ENCODE measurements at regions of chr1 and their contacts with region 1.

Region 1: DNA sequence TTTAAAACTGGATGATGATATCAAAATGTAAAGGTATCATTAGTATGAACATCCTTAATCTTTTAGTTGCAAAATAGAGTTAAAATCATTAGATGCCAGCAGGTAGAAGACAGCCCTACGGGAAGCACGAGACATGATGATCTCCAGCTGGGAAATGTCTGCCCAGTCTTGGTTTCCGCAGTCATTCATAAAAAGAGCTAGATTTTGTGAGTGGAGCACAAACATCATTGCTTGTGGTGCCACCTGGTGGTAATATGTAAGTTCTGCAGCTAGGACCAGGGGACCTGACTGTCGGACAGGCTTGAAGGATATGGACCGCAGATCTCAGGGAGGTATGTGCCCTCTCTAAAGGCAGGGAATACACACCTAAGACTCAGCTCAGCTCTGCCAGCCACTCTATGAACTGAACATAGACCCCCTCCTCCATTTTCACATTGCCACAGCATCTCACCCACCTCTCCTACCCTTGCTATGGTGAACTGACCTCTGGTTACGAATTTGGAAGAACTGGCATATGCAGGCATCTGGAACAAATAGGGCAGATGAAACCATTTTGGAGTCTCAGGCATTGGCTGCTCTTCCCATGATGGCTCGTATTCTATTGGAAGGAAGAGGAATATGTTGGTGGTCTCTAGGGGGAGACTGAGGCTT is 9.2 kb downstream of the FCMR start:
- DNase-seq: peak in 2 of 3 donors; percentile 60 to 81
- ATAC-seq: peak; percentile 65
- H3K4me3 ChIP-seq: no peak overlapping the region
- H3K4me1 ChIP-seq: peaks cover 16% of the 10 kb centered on the region
- CTCF ChIP-seq: peak; percentile 72

Region 2: GRCh38 chr1:206635080-206635977 is 277.2 kb before region 1 on chr1 and contains the start of gene DYRK3:
- intact Hi-C with region 1: loop called in 1 of 2 experiments (anchors 10 kb)
- DNase-seq: peak; percentile 94 to 96 (median 96)
- ATAC-seq: peak; percentile 99
- H3K4me3 ChIP-seq: peak within 1 kb of the TSS; percentile 48
- H3K4me1 ChIP-seq: peaks cover 12% of the 10 kb centered on the region
- CTCF ChIP-seq: peak; percentile 11
- total RNA-seq, gene DYRK3: 0.61 to 4.7 (median 1.4) TPM

Region 3: DNA sequence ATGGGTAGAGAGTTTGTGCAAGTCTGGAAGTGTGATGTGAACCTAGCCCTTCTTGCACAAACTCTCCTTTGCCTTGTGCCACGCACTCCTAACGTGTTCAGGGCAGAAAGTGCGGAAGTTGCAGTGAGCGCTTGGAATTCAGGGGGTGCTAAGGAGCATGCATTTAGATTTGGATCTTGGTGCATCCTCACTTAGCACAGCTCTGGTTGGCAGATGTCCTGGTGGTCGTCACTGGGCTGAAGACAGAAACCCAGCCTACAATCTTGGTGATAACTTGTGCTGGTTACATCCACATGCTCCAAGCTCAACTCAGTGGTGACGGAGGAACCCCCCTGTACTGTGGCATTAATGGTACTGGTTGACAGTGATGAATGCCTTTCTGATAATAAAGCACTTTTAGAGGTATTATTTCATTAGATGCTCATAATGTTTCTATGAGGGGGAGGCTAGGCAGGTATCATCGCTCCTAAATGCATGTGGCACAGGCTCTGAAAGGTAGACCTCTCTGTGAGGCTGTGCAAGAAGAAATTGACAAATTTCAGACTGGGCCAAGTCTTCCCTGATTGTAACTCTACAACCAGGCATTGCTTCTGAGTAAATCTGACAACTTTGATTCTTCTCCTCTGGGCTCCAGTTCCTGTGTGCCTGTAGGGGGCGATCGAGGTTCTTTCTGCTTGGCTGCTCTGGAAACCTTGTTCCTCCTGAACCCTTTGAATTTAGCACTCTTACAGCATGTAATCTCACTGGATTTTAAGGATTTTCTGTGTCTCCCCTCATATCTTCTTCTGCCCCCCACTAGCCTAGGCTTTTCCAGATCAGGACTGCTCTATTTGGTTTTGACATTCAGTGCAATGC is 187.2 kb before region 1 on chr1:
- intact Hi-C with region 1: loop called (anchors 5 to 10 kb)
- DNase-seq: peak in 1 of 3 donors; percentile 62
- ATAC-seq: peak; percentile 64
- H3K4me3 ChIP-seq: no peak overlapping the region
- H3K4me1 ChIP-seq: peaks cover 10% of the 10 kb centered on the region
- CTCF ChIP-seq: peak; percentile 40

Region 4: DNA sequence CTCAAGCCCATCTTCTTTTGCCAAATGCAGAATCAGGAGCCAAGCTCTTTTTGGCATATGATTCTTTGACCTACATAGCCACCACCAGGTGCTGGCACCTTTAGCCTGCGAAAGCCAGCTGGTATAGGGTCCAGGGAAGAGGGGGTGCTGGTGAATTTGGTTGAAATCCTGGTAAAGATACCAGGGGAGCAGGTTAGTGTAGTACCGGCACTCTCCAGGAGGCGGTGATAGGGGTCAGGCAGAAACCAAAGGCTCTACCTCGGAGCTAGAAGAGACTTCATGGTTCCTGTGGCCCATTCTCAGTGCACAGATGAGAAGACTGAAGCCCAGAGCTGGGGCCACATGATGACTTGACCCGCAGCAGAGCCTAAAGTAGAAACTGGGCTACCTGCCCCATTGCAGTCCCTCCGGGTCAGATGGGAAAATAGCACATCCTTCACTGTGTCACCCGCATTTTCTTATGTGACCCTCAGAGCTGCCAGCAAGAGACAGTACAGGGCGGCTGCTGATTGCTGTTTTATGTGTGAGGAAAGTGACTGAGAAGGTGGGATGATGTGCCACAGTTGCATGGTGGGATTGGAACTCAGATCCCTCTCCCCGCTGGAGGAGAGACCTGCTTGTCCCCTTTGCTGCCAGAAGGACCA is 177.9 kb before region 1 on chr1:
- intact Hi-C with region 1: loop called (anchors 5 to 10 kb)
- DNase-seq: peak in 2 of 3 donors; percentile 70 to 78
- ATAC-seq: peak; percentile 70
- H3K4me3 ChIP-seq: no peak overlapping the region
- H3K4me1 ChIP-seq: peaks cover 4% of the 10 kb centered on the region
- CTCF ChIP-seq: peak; percentile 57

Region 5: GRCh38 chr1:206809504-206810084 is 103.0 kb before region 1 on chr1:
- intact Hi-C with region 1: loop called in 1 of 2 experiments (anchors 5 kb)
- DNase-seq: peak in 1 of 3 donors; percentile 69
- ATAC-seq: peak; percentile 52
- H3K4me3 ChIP-seq: no peak overlapping the region
- H3K4me1 ChIP-seq: no peaks in the 10 kb centered on the region
- CTCF ChIP-seq: no peak

Region 6: DNA sequence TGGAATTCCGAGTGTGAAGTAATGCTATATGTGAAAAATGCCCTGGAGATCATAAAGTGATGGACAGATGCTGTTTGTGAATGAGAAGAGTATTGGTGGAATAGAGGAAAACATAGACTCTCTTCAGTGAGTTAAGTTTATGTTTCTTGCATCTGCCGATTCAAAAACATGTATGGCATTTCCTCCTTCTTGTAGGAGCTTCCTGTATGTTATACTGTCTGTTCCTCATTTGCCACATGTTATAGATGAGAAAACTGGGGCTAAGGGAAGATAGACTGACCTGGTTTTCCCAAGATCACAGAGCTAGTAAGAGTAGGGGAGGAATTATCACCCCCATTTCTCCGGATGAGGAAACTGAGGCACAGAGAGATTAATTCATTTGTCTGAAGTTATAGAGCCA is 88.2 kb before region 1 on chr1:
- intact Hi-C with region 1: no loop called
- DNase-seq: no peak
- ATAC-seq: no peak
- H3K4me3 ChIP-seq: no peak overlapping the region
- H3K4me1 ChIP-seq: no peaks in the 10 kb centered on the region
- CTCF ChIP-seq: no peak

Region 7: DNA sequence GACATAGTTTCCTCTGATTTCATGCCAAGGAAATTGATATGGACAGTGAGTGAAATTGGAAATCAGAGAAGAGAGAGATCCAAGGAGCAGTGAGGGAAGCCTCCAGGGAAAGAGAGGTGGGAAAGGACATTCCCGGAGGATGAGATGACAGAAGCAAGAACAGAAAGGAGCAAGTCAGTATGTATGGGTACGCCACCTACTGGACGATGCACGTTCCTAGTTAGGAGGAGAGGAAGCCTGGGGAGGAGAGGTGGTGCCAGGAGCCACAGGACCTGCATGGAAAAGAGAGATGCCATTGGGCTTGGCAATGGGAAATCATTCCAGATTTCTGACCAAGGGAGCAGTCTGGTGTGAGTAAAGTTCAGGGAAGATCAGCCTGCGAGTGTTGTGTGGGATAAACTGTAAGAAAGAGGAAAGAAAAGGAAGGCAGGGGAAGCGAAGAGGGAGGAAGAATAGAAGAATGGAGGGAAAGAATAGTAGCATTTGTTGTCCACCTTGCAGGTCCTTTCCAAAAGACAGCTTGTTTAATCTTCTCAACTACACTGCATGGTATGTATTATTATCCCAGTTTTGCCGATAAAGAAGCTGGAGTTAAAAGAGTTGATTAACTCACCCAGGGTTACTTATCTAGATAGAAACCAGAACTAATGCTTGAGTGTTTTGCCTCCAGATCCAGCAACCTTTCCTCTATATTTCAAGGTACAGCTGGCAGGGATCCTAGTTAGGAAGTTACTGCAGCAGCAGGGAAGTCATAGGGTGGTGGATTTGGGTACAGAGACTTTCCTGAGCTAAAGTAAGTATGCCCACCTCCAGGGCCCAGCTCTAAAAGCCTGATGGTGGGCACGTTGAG is 92.6 kb after region 1 on chr1:
- intact Hi-C with region 1: no loop called
- DNase-seq: peak in 1 of 3 donors; percentile 84
- ATAC-seq: peak; percentile 83
- H3K4me3 ChIP-seq: no peak overlapping the region
- H3K4me1 ChIP-seq: peaks cover 14% of the 10 kb centered on the region
- CTCF ChIP-seq: peak; percentile 57